ENCODE measurements at regions of chr11 and their contacts with region 1.

Region 1: GRCh38 chr11:65083834-65084597 is at the starts of genes CDCA5 and ZFPL1:
- DNase-seq: peak; percentile 98
- total RNA-seq, gene CDCA5: 1.5 TPM
- total RNA-seq, gene ZFPL1: 23.5 TPM

Region 2: GRCh38 chr11:65027213-65028067 is 56.6 kb before region 1 on chr11 and contains the start of gene SNX15:
- intact Hi-C with region 1: loop called (anchors 5 kb)
- DNase-seq: peak; percentile 96
- total RNA-seq, gene SNX15: 17.0 TPM

Region 3: DNA sequence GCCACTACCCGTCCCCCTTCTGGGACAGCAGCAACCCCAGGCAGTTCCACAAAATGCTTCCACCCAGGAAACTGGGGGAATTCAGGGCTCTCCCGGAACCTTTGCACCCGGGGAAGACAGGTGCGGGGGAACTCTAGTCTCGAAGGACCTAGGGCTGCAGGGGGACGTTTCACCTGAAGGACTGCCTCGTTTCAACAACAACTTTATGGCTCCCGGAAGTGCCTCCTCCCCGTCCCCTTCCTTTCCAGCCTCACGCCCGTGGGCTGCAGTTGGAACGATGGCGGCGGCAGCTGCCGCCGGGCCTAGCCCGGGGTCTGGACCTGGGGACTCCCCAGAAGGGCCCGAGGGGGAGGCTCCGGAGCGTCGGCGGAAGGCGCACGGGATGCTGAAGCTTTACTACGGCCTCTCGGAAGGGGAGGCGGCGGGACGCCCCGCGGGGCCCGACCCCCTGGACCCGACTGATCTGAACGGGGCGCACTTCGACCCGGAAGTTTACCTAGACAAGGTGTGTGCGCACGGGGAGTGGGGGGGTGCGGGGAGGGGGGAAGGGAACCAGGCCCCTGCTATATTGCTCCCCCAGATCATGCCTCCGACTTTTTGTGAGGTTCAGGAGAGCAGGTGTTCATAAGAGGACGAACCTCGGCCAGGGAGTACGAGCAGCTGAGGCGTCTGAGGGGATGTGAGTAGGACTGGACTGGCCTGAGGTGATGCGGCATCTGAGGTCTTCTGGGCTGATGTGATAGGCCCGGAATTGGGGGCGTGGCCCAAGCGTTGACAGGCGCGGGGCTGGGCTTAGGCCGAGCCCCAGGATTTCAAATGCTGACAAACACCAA is 12.2 kb after region 1 on chr11 and contains the start of gene VPS51:
- intact Hi-C with region 1: loop called (anchors 1 kb)
- DNase-seq: peak; percentile 93
- total RNA-seq, gene VPS51: 87.1 TPM

Region 4: DNA sequence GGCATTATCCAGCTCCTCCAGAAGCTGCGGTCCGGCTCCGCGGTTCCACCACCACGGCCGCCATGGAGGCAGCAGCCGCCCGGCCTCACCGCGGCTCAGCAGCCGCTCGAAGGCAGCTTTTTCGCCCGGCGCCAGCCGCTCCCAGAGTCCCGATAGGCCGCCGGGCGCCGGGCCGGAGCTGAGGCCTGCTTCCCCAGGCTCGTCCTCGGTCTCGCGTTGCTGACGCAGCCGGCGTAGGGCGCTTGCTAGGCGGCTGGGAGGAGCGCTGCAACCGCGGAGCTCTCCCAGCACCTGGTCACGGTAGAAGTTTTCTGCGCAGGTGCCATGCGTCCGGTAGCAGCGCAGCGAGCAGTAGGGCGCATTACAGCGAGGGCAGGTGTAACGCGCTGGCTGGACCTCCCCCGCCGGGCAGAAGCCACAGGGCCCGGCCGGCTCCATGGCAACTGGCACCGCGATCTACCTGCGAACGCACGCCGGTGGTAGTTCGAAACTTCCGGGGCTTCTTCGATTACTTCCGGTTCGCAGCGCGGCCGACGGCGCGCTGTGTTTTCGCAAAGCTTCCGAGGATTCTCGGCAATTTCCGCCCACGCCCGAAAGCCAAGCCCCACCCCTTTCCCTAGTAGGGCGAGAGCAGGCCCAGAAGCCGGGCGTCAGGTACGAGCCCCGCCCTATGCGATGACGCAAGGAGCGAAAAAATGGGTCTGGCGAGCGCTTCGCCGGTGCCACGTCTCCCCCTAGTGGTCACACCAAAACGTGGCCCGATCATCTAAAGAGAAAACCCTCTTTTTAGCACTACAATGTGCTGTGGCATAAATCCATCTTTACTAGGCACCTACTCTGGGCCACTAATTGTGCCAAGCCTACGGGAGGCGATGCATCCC is 33.4 kb after region 1 on chr11 and contains the start of gene ZNHIT2:
- intact Hi-C with region 1: loop called (anchors 2 kb)
- DNase-seq: peak; percentile 100
- total RNA-seq, gene ZNHIT2: 5.5 TPM

Region 5: GRCh38 chr11:65225279-65226102 is 141.5 kb after region 1 on chr11:
- intact Hi-C with region 1: no loop called
- DNase-seq: peak; percentile 81

Measured in cardiac septum (tissue), 1 donor.